ENCODE measurements at regions of chr16 and their contacts with region 1.

Region 1: DNA sequence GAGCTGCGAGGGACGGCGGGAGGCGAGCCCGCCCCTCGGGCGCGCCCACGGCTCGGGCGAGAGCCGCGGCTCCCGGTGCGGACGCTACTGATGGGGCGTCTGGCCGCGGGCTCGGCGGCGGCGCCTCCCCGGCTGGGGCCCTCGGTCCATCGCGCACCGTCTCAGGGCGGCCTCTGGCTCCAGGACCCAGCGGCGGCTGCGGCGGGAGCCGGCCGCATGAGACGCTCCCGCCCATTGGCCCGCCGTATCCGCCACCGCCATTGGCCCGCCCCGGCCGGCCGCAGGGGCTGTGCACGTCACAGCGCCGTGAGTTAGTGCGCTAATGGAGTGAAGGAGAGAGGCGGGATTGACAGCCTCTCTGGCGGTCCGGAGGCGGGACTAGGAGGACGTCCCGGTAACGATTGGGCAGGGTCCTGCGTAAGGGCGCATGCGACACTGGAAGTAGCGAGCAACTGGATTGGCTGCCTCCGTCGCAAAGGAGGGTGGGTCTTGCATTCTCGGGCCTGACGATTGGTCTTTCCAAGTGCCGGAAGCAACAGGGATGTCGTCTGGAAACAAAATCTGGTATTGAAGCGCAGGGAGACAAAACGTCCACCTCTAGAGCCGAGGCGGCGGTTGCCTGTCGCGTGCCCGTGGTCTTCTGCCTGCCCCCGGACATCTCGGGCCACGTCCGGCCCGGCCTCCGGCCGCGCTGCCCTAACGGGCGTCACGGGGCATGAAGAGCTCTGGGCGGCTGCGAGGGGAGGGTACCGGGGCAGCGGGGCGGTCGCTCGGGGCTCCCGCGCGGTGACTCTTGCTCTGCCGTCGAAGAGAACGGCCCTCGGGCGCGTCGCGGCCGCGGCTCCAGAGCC is at the start of gene ANKRD11:
- DNase-seq: peak; percentile 100
- H3K4me3 Mint-ChIP-seq: peak within 1 kb of the TSS; percentile 94
- H3K27ac Mint-ChIP-seq: peak within 1 kb of the TSS; percentile 96
- H3K4me1 Mint-ChIP-seq: peaks cover 41% of the 10 kb centered on the region
- H3K27me3 Mint-ChIP-seq: no peaks in the 10 kb centered on the region
- total RNA-seq, gene ANKRD11: 152 TPM in 2 replicates

Region 2: GRCh38 chr16:89241187-89242007 is 249.2 kb before region 1 on chr16:
- intact Hi-C with region 1: loop called (anchors 1 kb)
- DNase-seq: peak; percentile 93
- H3K4me3 Mint-ChIP-seq: peak overlapping the region; percentile 100
- H3K27ac Mint-ChIP-seq: peak overlapping the region; percentile 100
- H3K4me1 Mint-ChIP-seq: peaks cover 15% of the 10 kb centered on the region
- H3K27me3 Mint-ChIP-seq: no peaks in the 10 kb centered on the region

Region 3: DNA sequence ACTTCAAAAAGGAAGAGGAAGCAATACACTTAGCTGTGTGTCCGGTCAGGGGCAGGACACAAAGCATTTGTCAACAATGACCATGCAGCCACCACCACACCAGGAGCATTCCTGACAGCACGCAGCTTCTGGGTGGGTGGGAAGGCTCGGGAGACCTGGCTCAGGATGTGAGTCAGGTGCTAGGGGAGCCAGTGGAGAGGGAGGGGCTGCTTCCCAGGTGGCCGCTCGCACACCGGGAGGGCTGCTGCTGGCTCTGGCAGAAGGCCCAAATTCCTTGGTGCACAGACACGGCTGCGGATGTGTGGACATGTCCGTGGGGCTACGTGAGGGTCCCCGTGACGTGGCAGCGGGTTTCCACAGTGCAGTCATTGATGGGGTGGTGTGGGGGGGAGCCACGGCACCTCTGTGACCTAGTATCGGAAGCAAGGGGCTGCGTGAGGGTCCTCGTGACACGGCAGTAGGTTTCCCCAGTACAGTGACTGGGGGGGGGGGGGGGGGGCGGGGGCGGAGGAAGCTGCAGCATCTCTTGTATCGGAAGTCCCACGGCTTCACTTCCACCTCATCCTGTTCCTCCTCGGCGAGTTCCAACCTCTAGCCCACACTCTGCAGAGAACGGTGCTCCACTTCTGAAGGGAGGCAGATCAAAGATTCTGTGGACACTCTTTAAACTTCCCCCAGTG is 160.3 kb before region 1 on chr16:
- intact Hi-C with region 1: loop called (anchors 5 kb)
- DNase-seq: peak; percentile 80
- H3K4me3 Mint-ChIP-seq: peak overlapping the region; percentile 17
- H3K27ac Mint-ChIP-seq: peak overlapping the region; percentile 58
- H3K4me1 Mint-ChIP-seq: peaks cover 67% of the 10 kb centered on the region
- H3K27me3 Mint-ChIP-seq: no peaks in the 10 kb centered on the region

Region 4: GRCh38 chr16:89422905-89423630 is 67.5 kb before region 1 on chr16:
- intact Hi-C with region 1: loop called (anchors 2 kb)
- DNase-seq: peak; percentile 81
- H3K4me3 Mint-ChIP-seq: peak overlapping the region; percentile 50
- H3K27ac Mint-ChIP-seq: peak overlapping the region; percentile 75
- H3K4me1 Mint-ChIP-seq: peaks cover 66% of the 10 kb centered on the region
- H3K27me3 Mint-ChIP-seq: no peaks in the 10 kb centered on the region

Region 5: GRCh38 chr16:89453501-89454321 is 36.9 kb before region 1 on chr16:
- intact Hi-C with region 1: no loop called
- DNase-seq: no peak
- H3K4me3 Mint-ChIP-seq: peak overlapping the region; percentile 5
- H3K27ac Mint-ChIP-seq: peak overlapping the region; percentile 73
- H3K4me1 Mint-ChIP-seq: peaks cover 56% of the 10 kb centered on the region
- H3K27me3 Mint-ChIP-seq: no peaks in the 10 kb centered on the region

Region 6: GRCh38 chr16:89560378-89561141 is 69.9 kb after region 1 on chr16 and contains the start of gene RPL13:
- intact Hi-C with region 1: loop called (anchors 1 kb)
- DNase-seq: peak; percentile 98
- H3K4me3 Mint-ChIP-seq: peak within 1 kb of the TSS; percentile 94
- H3K27ac Mint-ChIP-seq: peak within 1 kb of the TSS; percentile 99
- H3K4me1 Mint-ChIP-seq: peaks cover 44% of the 10 kb centered on the region
- H3K27me3 Mint-ChIP-seq: no peaks in the 10 kb centered on the region
- total RNA-seq, gene RPL13: 2,234 and 2,296 TPM in 2 replicates

Measured in activated CD4-positive, alpha-beta T cell treated with anti-CD3 and anti-CD28 coated beads, Interleukin-2, amount 10 ng/mL, durations not matched to agents 24 days and 14 days (primary cell).